Lower lobe of right lung (tissue), 2 donors: ENCODE measurements at regions of chr10 and their contacts with region 1.

Region 1: DNA sequence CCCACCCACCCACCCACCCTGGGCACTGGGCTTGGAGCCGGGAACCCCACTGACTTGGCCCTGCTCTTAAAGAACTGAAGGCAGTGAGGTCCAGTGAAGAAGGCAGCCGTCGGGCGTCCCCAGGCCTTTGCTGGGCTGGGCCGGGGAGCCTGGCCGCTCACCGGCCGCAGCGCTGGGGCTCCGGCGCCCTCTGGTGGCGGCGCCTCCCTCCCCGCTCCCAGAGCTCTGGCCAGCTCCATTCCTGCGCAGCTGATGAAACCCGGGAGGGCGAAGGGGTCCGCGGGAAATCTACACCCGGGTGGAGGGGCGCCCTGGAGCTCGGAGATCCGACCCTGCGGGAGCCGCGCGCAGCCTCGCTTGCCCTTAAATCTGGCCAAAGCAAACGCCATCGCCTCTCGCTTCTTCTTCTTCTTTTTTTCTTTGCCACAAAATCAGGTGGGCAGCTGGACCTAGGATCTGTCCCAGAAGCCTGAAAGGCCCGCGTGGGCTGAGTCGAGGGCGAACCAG is 1.7 kb upstream of the CXCL12 start:
- DNase-seq: no peak
- ATAC-seq: peak; percentile 86 to 92
- H3K4me3 ChIP-seq: no peak overlapping the region
- H3K27ac ChIP-seq: no peak overlapping the region
- H3K4me1 ChIP-seq: peaks cover 7% of the 10 kb centered on the region
- H3K27me3 ChIP-seq: peaks cover 47% of the 10 kb centered on the region
- CTCF ChIP-seq: peak; percentile 87

Region 2: GRCh38 chr10:43671656-43672531 is 714.7 kb before region 1 on chr10:
- intact Hi-C with region 1: loop called (anchors 5 kb)
- DNase-seq: no peak
- ATAC-seq: peak; percentile 77 to 87
- H3K4me3 ChIP-seq: no peak overlapping the region
- H3K27ac ChIP-seq: no peak overlapping the region
- H3K4me1 ChIP-seq: peaks cover 7% of the 10 kb centered on the region
- H3K27me3 ChIP-seq: peaks cover 33% of the 10 kb centered on the region
- CTCF ChIP-seq: peak; percentile 83

Region 3: GRCh38 chr10:44517635-44518034 is 131.0 kb after region 1 on chr10:
- intact Hi-C with region 1: no loop called
- DNase-seq: no peak
- ATAC-seq: no peak
- H3K4me3 ChIP-seq: no peak overlapping the region
- H3K27ac ChIP-seq: no peak overlapping the region
- H3K4me1 ChIP-seq: no peaks in the 10 kb centered on the region
- H3K27me3 ChIP-seq: no peaks in the 10 kb centered on the region
- CTCF ChIP-seq: no peak